ENCODE measurements at regions of chr1 and their contacts with region 1.

Region 1: GRCh38 chr1:94919241-94920030 is 7.5 kb downstream of the CNN3 start:
- DNase-seq: no peak
- ATAC-seq: no peak
- H3K4me3 ChIP-seq: no peak overlapping the region
- H3K27ac ChIP-seq: no peak overlapping the region
- H3K4me1 ChIP-seq: peaks cover 19% of the 10 kb centered on the region
- H3K27me3 ChIP-seq: no peaks in the 10 kb centered on the region
- CTCF ChIP-seq: no peak
- POLR2A ChIP-seq: no peak
- RAD21 ChIP-seq: no peak

Region 2: GRCh38 chr1:94180650-94181049 is 738.8 kb before region 1 on chr1:
- CTCF ChIA-PET with region 1: no interaction called
- POLR2A ChIA-PET with region 1: no interaction called
- dilution Hi-C with region 1: no loop called
- in situ Hi-C with region 1: no loop called
- intact Hi-C with region 1: no loop called
- DNase-seq: peak; percentile 16
- ATAC-seq: no peak
- H3K4me3 ChIP-seq: no peak overlapping the region
- H3K27ac ChIP-seq: no peak overlapping the region
- H3K4me1 ChIP-seq: no peaks in the 10 kb centered on the region
- H3K27me3 ChIP-seq: no peaks in the 10 kb centered on the region
- CTCF ChIP-seq: no peak
- POLR2A ChIP-seq: no peak
- RAD21 ChIP-seq: no peak

Region 3: GRCh38 chr1:94903280-94904009 is 16.0 kb before region 1 on chr1:
- CTCF ChIA-PET with region 1: no interaction called
- POLR2A ChIA-PET with region 1: no interaction called
- dilution Hi-C with region 1: no loop called
- in situ Hi-C with region 1: no loop called
- intact Hi-C with region 1: loop called (anchors 2 kb)
- DNase-seq: peak; percentile 49
- ATAC-seq: no peak
- H3K4me3 ChIP-seq: no peak overlapping the region
- H3K27ac ChIP-seq: peak overlapping the region; percentile 39; the same call in 1 of the 2 replicates
- H3K4me1 ChIP-seq: peaks cover 26% of the 10 kb centered on the region
- H3K27me3 ChIP-seq: no peaks in the 10 kb centered on the region
- CTCF ChIP-seq: no peak
- POLR2A ChIP-seq: no peak
- RAD21 ChIP-seq: no peak